MCF 10A (cell line): ENCODE measurements at regions of chr5 and their contacts with region 1.

Region 1: DNA sequence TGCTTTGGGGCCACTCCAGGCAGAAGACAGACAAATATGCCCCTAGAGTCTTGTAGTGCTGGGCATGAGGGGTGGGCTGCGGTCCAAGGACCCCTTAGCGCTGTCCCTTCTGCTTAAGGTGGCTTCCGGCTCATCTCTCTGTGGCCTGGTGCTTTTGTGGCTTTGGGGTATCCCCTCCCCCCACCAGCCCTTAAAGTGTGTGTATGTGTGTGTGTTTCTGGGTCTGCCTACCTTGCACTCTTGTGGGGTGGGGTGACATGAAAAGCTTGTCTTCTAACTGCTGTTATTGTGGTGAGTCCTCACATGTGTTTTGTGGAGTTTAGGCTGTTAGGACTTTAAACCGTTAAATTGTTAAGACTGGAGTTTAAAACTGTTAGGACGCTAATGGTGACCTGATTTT is 23.6 kb downstream of the MARCHF6 start:
- DNase-seq: no peak
- H3K4me3 Mint-ChIP-seq: no peak overlapping the region
- H3K27ac Mint-ChIP-seq: no peak overlapping the region
- H3K4me1 Mint-ChIP-seq: peaks cover 22% of the 10 kb centered on the region
- H3K27me3 Mint-ChIP-seq: no peaks in the 10 kb centered on the region
- CTCF ChIP-seq: no peak

Region 2: GRCh38 chr5:10364186-10364683 is 12.8 kb before region 1 on chr5:
- CTCF ChIA-PET with region 1: interaction called, 3 read pairs
- POLR2A ChIA-PET with region 1: interaction called, 22 read pairs
- intact Hi-C with region 1: no loop called
- DNase-seq: peak; percentile 43
- H3K4me3 Mint-ChIP-seq: no peak overlapping the region
- H3K27ac Mint-ChIP-seq: no peak overlapping the region
- H3K4me1 Mint-ChIP-seq: peaks cover 37% of the 10 kb centered on the region
- H3K27me3 Mint-ChIP-seq: no peaks in the 10 kb centered on the region
- CTCF ChIP-seq: peak; percentile 9